Mammary epithelial cell (primary cell): ENCODE measurements at regions of chr3 and their contacts with region 1.

Region 1: DNA sequence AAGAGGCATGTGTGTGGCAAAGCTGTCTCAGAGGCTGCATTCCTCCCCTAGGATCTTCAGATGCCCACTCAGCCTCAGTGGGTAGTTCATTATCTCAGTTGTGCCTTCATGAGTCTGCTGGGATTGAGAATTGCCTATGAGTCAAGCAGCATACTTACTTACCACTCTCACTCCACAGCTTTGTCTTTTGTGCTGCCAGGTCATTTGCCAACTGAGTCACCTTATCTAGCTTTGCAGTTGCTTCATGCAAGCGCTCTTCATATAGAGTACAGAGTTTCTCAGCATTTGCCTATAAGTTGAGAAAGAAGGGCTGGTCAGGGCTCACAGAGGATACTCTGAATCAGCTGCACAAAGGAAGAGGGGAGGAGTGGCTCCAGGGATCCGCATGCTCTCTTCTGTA is 89.5 kb downstream of the MYH15 start:
- DNase-seq: peak; percentile 97
- H3K4me3 ChIP-seq: no peak overlapping the region
- H3K27ac ChIP-seq: peak overlapping the region; percentile 12
- H3K4me1 ChIP-seq: peaks cover 13% of the 10 kb centered on the region
- H3K27me3 ChIP-seq: no peaks in the 10 kb centered on the region
- CTCF ChIP-seq: no peak

Region 2: DNA sequence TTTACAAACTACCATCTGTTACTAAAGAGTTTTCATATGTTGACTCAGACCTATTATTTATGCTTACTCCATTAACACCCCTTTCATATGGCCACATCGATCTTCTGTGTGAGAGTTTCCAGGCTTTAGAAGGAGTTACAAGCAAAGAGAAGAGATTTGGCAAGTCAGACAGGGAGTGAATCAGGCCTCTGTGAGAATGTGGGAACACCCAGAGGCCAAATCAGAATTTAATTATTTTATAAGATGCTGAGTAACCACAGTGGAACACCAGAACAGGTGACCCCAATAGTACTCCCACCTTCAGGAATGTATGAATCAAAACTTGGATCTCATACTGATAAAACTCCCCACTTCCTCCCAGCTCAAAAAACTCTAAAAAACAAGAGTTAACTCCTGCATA is 240.7 kb before region 1 on chr3:
- CTCF ChIA-PET with region 1: no interaction called
- dilution Hi-C with region 1: no loop called
- in situ Hi-C with region 1: no loop called
- intact Hi-C with region 1: no loop called
- DNase-seq: peak; percentile 87
- H3K4me3 ChIP-seq: no peak overlapping the region
- H3K27ac ChIP-seq: peak overlapping the region; percentile 32
- H3K4me1 ChIP-seq: peaks cover 12% of the 10 kb centered on the region
- H3K27me3 ChIP-seq: no peaks in the 10 kb centered on the region
- CTCF ChIP-seq: no peak

Region 3: GRCh38 chr3:108552267-108553159 is 131.6 kb after region 1 on chr3:
- CTCF ChIA-PET with region 1: no interaction called
- dilution Hi-C with region 1: no loop called
- in situ Hi-C with region 1: no loop called
- intact Hi-C with region 1: loop called (anchors 5 kb)
- DNase-seq: peak; percentile 21
- H3K4me3 ChIP-seq: no peak overlapping the region
- H3K27ac ChIP-seq: no peak overlapping the region
- H3K4me1 ChIP-seq: no peaks in the 10 kb centered on the region
- H3K27me3 ChIP-seq: no peaks in the 10 kb centered on the region
- CTCF ChIP-seq: peak; percentile 31 to 46